Activated B cell treated with CpG ODN at 0.5 μM for 24 hours (primary cell): ENCODE measurements at regions of chrX and their contacts with region 1.

Region 1: DNA sequence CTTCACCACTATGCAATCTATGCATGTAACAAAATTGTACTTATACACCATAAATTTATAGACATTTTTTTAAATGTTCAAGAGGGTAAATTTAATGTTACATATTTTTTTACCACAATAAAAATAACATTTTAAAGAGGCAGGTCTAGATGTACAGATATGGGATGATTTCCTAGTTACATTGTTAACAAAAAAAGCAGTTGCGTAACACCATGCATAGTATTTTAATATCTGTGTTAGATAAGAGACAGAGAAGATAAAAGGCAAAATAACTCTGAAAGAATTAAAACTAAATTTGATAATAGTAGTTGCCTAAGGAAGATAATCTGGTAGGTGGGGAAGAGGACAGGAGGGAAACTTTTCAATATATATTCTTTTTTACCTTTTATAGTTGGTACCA is 9.1 kb upstream of the ATRX start:
- DNase-seq: no peak
- ATAC-seq: no peak
- H3K4me3 Mint-ChIP-seq: no peak overlapping the region
- H3K27ac Mint-ChIP-seq: no peak overlapping the region
- H3K4me1 Mint-ChIP-seq: no peaks in the 10 kb centered on the region
- H3K27me3 Mint-ChIP-seq: no peaks in the 10 kb centered on the region
- CTCF ChIP-seq: no peak

Region 2: GRCh38 chrX:77768787-77769186 is 26.3 kb before region 1 on chrX:
- CTCF ChIA-PET with region 1: no interaction called
- POLR2A ChIA-PET with region 1: no interaction called
- intact Hi-C with region 1: loop called (anchors 5 kb)
- DNase-seq: no peak
- ATAC-seq: no peak
- H3K4me3 Mint-ChIP-seq: no peak overlapping the region
- H3K27ac Mint-ChIP-seq: peak overlapping the region; percentile 36
- H3K4me1 Mint-ChIP-seq: peaks cover 24% of the 10 kb centered on the region
- H3K27me3 Mint-ChIP-seq: no peaks in the 10 kb centered on the region
- CTCF ChIP-seq: no peak

Region 3: DNA sequence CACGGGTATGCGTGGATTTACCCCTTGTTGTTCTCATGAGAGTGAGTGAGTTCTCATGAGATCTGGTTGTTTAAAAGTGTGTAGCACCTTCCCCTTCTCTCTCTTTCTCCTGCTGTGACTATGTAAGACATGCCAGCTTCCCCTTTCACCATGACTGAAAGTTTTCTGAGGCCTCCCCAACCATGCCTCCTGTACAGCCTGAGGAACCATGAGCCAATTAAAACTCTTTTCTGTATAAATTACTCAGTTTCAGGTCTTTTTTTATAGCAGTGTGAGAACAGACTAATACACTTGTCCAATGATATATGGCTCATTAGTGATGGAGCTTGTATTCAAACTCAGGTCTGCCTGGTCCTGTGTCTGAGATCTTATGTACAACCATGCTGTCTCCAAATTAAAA is 892.5 kb after region 1 on chrX:
- CTCF ChIA-PET with region 1: no interaction called
- POLR2A ChIA-PET with region 1: no interaction called
- intact Hi-C with region 1: no loop called
- DNase-seq: no peak
- ATAC-seq: peak; percentile 79
- H3K4me3 Mint-ChIP-seq: no peak overlapping the region
- H3K27ac Mint-ChIP-seq: peak overlapping the region; percentile 56
- H3K4me1 Mint-ChIP-seq: peaks cover 9% of the 10 kb centered on the region
- H3K27me3 Mint-ChIP-seq: no peaks in the 10 kb centered on the region
- CTCF ChIP-seq: no peak